ENCODE measurements at regions of chr14 and their contacts with region 1.

Region 1: GRCh38 chr14:53872681-53873089 is 83.9 kb downstream of the BMP4 start:
- DNase-seq: no peak
- H3K4me3 ChIP-seq: no peak overlapping the region
- H3K27me3 ChIP-seq: peaks cover 2% of the 10 kb centered on the region
- CTCF ChIP-seq: no peak

Region 2: DNA sequence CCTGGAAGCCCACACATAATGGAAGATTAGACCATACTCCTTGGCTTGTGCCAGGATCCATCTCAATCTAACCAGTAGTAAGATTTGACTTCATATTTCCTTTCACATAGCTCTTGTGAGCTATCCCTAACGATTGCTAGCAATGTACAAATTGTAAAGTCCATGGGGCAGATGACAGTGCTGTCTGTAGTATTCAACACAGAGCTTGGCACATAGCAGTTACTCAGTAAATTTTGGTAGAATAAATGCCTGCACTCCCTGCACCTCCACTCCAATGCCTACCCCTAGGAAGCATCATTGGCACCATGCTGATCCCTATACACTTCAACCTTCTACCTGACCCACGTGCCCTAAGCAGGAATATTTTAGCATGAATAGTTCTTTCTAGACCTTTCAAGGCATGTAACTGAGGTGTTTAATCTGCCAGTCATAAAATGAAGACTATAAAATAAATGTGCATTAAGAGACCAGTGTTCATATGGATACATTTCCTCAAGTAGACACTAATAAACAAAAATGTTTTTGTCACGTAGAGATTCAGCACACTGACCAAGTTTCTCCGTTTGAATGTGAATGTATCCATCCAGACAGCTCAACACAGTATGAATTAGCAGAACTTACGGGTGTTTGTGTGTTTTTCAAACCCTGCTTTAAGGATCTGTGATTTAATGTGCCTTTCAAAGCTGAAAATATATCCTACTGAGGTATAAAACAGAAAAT is 14.9 kb before region 1 on chr14:
- CTCF ChIA-PET with region 1: interaction called, 10 read pairs
- POLR2A ChIA-PET with region 1: no interaction called
- DNase-seq: no peak
- H3K4me3 ChIP-seq: no peak overlapping the region
- H3K27me3 ChIP-seq: peaks cover 8% of the 10 kb centered on the region
- CTCF ChIP-seq: no peak

Region 3: GRCh38 chr14:54148251-54148650 is 275.6 kb after region 1 on chr14:
- CTCF ChIA-PET with region 1: no interaction called
- POLR2A ChIA-PET with region 1: no interaction called
- DNase-seq: no peak
- H3K4me3 ChIP-seq: no peak overlapping the region
- H3K27me3 ChIP-seq: no peaks in the 10 kb centered on the region
- CTCF ChIP-seq: no peak